AG04450 (cell line): ENCODE measurements at regions of chr7 and their contacts with region 1.

Region 1: DNA sequence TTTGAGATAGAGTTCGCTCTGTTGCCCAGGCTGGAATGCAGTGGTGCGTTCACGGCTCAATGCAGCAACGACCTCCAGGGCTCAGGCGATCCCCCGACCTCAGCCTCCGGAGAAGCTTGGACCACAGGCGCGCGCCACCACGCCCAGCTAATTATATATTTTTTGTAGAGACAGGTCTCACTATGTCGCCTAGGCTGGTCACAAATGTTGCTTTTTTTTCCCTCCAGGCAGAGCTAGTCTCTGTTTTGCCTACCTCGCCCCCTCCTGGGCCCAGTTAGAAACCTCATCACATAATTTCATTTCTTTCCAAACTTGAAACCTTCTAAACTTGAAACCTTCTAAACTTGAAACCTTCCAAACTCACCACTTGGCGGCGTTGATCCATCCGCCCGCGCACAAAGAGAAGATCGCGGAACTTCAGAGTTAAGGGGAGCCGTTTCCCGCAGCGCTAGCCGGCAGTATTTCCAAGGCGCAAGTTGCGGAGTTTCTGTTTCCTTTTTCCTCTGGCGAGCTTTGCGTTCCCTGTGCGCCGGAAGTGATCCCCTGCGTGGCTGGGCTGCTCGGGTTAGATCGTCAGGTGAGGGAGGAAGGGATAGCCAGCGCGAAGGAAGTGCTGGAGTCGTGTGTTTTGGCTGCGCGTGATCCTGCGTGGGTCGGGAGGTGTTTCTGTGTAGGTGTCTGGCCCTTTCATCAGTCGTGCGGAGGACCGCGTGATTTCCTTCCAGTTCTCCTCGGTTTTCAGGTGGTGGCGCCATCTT is at the start of gene SSBP1:
- DNase-seq: peak; percentile 93
- H3K4me3 ChIP-seq: peak within 1 kb of the TSS; percentile 99
- H3K27ac ChIP-seq: peak within 1 kb of the TSS; percentile 81
- H3K27me3 ChIP-seq: no peaks in the 10 kb centered on the region
- CTCF ChIP-seq: peak; percentile 74
- polyA plus RNA-seq, gene SSBP1: 152 and 212 TPM in 2 replicates

Region 2: GRCh38 chr7:140242057-140243031 is 1495.7 kb before region 1 on chr7:
- CTCF ChIA-PET with region 1: interaction called, 10 read pairs
- POLR2A ChIA-PET with region 1: no interaction called
- DNase-seq: no peak
- H3K4me3 ChIP-seq: no peak overlapping the region
- H3K27ac ChIP-seq: no peak overlapping the region
- H3K27me3 ChIP-seq: peaks cover 31% of the 10 kb centered on the region
- CTCF ChIP-seq: no peak

Region 3: DNA sequence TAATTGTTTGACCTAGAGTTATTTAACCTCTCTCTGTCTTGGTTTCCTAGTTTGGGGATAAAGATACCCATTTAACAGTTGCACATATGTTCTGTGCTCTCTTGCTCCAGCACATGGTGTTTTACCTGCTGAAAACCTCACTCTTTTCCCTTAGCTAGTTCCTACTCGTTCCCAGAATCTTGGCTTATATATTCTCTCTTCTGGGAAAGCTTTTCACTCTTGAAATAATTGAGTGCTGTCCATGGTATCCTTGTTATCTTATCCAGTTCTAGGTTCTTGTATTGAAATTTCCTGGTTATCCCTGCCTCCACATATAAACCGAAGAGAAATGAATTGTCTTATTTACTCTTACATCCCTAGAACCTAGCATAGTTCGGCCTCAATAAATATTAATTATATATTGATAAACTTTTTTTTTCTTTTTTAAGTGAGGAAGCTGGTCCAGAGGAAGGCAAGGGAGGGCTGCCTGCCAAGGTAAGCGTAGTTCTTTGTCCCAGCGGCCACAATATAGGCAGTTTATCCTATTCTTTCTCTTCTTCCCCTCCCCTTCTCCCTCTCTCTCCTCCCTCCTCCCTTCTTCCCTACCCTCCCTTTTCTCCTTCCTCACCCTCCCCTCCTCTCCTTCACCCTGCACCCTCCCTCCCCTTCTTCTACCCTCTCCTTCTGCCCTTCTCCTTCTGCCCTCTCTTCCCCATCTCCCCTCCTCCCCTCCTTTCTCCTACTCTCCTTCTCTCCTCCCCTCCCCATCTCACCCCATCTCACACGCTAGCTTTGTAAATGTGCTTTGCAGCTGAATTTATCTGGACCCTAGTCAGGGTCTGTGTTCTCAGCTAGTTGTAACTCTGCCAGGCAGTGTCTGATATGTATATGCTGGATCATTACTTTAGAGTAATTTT is 22.0 kb before region 1 on chr7:
- CTCF ChIA-PET with region 1: interaction called, 15 read pairs
- POLR2A ChIA-PET with region 1: no interaction called
- DNase-seq: no peak
- H3K4me3 ChIP-seq: no peak overlapping the region
- H3K27ac ChIP-seq: no peak overlapping the region
- H3K27me3 ChIP-seq: no peaks in the 10 kb centered on the region
- CTCF ChIP-seq: no peak

Region 4: GRCh38 chr7:141785706-141786552 is 47.9 kb after region 1 on chr7:
- CTCF ChIA-PET with region 1: interaction called, 18 read pairs
- POLR2A ChIA-PET with region 1: no interaction called
- DNase-seq: peak; percentile 16
- H3K4me3 ChIP-seq: no peak overlapping the region
- H3K27ac ChIP-seq: no peak overlapping the region
- H3K27me3 ChIP-seq: no peaks in the 10 kb centered on the region
- CTCF ChIP-seq: peak; percentile 85

Region 5: DNA sequence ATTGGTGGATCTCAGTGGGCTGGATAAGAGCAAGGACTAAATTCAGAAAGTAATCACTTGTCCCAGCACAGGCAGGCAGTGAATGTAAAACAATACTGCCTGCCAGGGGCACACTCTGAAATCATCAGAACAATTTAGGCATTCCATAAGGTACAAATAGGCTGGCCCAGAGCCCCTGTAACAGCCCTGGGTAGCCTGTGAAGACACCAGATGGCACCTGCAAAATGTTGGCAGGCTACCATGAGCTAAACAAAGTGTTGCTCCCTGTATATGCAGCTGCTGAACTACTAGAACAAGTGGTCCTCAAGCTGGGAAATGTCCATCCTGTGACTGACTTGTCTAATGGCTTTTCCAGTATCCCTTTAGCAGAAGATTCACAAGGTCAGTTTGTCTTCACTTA is 106.2 kb after region 1 on chr7:
- CTCF ChIA-PET with region 1: no interaction called
- POLR2A ChIA-PET with region 1: no interaction called
- DNase-seq: no peak
- H3K4me3 ChIP-seq: no peak overlapping the region
- H3K27ac ChIP-seq: no peak overlapping the region
- H3K27me3 ChIP-seq: no peaks in the 10 kb centered on the region
- CTCF ChIP-seq: no peak

Region 6: DNA sequence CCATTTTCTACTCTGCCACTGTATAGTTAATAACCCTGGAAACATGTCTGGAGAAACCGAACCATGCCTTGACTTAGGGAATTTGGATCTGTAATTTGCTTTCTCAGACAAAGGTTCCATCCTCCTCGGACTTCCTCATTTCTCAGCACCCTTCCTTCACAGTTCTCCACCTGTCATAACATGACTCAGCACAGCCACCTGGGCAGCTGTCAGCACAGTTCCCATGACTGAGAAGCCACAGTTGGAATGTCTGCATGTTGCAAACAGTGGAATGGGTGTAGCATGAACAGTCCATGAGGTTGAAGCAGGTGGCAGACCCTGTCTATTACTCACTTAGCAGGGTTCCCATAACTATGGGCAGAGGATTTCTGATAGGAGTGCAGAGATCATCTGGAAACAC is 177.6 kb after region 1 on chr7:
- CTCF ChIA-PET with region 1: no interaction called
- POLR2A ChIA-PET with region 1: no interaction called
- DNase-seq: no peak
- H3K4me3 ChIP-seq: no peak overlapping the region
- H3K27ac ChIP-seq: no peak overlapping the region
- H3K27me3 ChIP-seq: no peaks in the 10 kb centered on the region
- CTCF ChIP-seq: no peak